Heart right ventricle (tissue), 16 donors: ENCODE measurements at regions of chr7 and their contacts with region 1.

Region 1: DNA sequence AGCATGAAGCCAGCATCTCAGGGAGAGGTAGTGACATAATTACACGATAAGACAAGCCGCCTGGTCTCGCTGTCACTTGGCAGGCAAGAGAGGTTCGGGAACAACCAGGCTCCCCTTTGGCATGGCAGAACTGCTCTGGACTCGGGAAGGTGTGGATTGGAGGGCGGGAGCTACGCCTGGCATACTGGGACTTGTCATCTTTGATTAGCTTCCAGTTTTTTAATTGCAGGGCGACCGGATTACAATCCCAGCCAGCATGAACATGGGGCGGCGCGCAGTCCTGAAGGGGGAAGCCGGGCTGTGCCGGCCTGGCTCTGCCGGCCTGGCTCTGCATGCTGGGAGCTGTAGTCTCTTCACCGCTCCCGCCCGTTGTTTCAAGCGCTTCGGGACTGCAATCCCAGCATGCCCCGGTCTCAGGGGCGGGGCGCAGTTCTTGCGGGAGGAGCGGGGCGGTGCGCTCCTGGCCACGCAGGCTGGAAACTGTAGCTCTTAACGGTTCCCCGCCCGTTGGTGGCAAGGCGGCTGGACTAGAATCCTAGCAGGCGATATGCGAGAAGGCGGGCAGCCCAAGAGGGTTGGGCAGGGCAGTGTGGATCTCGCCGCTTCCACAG is 45.5 kb upstream of the ZNF716 start:
- DNase-seq: peak; percentile 67 to 75
- ATAC-seq: peak; percentile 89 to 99 (median 97)
- H3K4me3 ChIP-seq: peak overlapping the region in 9 of 10 donors; percentile 14 to 61 (median 50)
- H3K27ac ChIP-seq: peak overlapping the region in 9 of 10 donors; percentile 51 to 81 (median 72)
- H3K4me1 ChIP-seq: no peaks in the 10 kb centered on the region
- H3K27me3 ChIP-seq: peaks cover 0 to 6% (median 0%) of the 10 kb centered on the region in 7 donors
- CTCF ChIP-seq: no peak

Region 2: GRCh38 chr7:56447864-56448693 is 956.4 kb before region 1 on chr7:
- intact Hi-C with region 1: no loop called
- DNase-seq: no peak
- ATAC-seq: peak in 1 of 8 donors; percentile 25
- H3K4me3 ChIP-seq: peak overlapping the region in 2 of 10 donors; percentile 14 to 18
- H3K27ac ChIP-seq: no peak overlapping the region
- H3K4me1 ChIP-seq: no peaks in the 10 kb centered on the region
- H3K27me3 ChIP-seq: no peaks in the 10 kb centered on the region
- CTCF ChIP-seq: no peak

Region 3: GRCh38 chr7:57300747-57301146 is 103.7 kb before region 1 on chr7:
- intact Hi-C with region 1: no loop called
- DNase-seq: no peak
- ATAC-seq: no peak
- H3K4me3 ChIP-seq: no peak overlapping the region
- H3K27ac ChIP-seq: no peak overlapping the region
- H3K4me1 ChIP-seq: no peaks in the 10 kb centered on the region
- H3K27me3 ChIP-seq: no peaks in the 10 kb centered on the region
- CTCF ChIP-seq: no peak

Region 4: GRCh38 chr7:57328457-57328856 is 76.0 kb before region 1 on chr7:
- intact Hi-C with region 1: loop called in 1 of 10 experiments (anchors 2 kb)
- DNase-seq: peak; percentile 76 to 84
- ATAC-seq: peak; percentile 84 to 99 (median 96)
- H3K4me3 ChIP-seq: no peak overlapping the region
- H3K27ac ChIP-seq: peak overlapping the region in 6 of 10 donors; percentile 5 to 75 (median 48)
- H3K4me1 ChIP-seq: peaks cover 0 to 3% (median 0%) of the 10 kb centered on the region in 9 donors
- H3K27me3 ChIP-seq: no peaks in the 10 kb centered on the region
- CTCF ChIP-seq: peak in 6 of 9 donors; percentile 7 to 41 (median 28)

Region 5: DNA sequence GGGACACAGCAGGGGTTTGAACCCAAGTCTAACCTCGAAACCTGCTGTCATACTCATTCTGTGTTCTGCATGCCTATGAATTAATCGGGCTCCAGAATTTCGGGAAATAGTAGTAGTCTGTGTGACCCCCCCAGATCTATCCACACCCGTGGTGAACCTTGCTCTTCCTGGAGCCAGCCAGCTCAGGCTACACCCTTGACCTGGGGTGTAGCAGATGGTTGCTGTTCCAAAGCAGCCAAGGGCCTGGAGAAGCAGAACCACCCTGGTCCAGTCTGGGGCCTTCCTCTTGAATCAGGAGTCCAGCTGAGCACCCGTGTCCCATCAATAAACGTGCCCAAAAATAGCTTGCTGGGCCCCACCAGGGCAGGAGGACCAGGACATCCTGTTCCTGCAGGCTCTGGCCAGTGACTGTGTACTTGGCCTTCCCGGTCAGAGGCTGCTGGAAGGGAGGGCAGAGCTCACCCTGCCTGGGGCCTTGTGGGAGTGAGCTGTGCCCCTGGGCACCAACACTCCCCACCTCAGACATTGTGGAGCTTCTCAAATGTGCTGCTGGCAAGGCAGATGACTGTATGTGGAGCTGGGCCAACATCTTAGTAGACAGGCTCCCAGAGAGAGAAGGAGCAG is 55.7 kb before region 1 on chr7:
- intact Hi-C with region 1: no loop called
- DNase-seq: peak; percentile 13 to 64
- ATAC-seq: peak in 7 of 8 donors; percentile 23 to 93 (median 74)
- H3K4me3 ChIP-seq: no peak overlapping the region
- H3K27ac ChIP-seq: peak overlapping the region in 6 of 10 donors; percentile 32 to 79 (median 56)
- H3K4me1 ChIP-seq: peaks cover 0 to 19% (median under 1%) of the 10 kb centered on the region in 9 donors
- H3K27me3 ChIP-seq: no peaks in the 10 kb centered on the region
- CTCF ChIP-seq: no peak

Region 6: GRCh38 chr7:57381581-57381980 is 22.9 kb before region 1 on chr7:
- intact Hi-C with region 1: no loop called
- DNase-seq: no peak
- ATAC-seq: no peak
- H3K4me3 ChIP-seq: no peak overlapping the region
- H3K27ac ChIP-seq: no peak overlapping the region
- H3K4me1 ChIP-seq: no peaks in the 10 kb centered on the region
- H3K27me3 ChIP-seq: peaks cover 0 to 8% (median 0%) of the 10 kb centered on the region in 7 donors
- CTCF ChIP-seq: no peak